MCF 10A (cell line): ENCODE measurements at regions of chr12 and their contacts with region 1.

Region 1: GRCh38 chr12:96194971-96195844 is 1.0 kb downstream of the ELK3 start:
- DNase-seq: peak; percentile 85
- H3K4me3 Mint-ChIP-seq: peak overlapping the region; percentile 95
- H3K27ac Mint-ChIP-seq: peak overlapping the region; percentile 75
- H3K4me1 Mint-ChIP-seq: peaks cover 13% of the 10 kb centered on the region
- H3K27me3 Mint-ChIP-seq: no peaks in the 10 kb centered on the region
- CTCF ChIP-seq: no peak

Region 2: DNA sequence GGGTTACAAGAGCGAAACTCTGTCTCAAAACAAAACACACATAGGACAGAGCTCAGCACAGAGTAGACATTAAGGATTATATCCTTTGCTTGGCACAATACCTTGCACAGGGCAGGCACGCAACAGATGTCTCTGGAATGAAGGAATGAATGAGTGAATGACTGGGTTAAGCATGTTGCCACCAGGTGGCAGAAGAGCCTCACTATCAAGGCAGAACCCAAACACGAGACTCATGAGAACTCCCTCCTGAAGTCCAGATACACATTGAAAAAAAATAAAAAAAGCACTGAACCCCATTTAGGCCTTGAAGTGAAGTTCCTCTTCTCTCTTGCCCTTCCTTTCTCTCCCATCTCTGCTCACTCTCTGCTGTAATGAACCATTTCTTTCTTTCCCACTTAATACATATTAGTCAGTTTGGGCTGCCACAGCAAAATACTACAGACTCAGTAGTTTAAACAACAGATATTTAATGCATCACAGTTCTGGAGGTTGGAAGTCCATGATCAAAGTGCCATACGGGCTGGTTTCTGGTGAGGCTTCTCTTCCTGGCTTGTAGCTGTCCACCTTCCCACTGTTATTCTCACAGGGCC is 133.2 kb before region 1 on chr12:
- CTCF ChIA-PET with region 1: interaction called, 3 read pairs
- POLR2A ChIA-PET with region 1: interaction called, 4 read pairs
- intact Hi-C with region 1: loop called (anchors 5 kb)
- DNase-seq: peak; percentile 87
- H3K4me3 Mint-ChIP-seq: no peak overlapping the region
- H3K27ac Mint-ChIP-seq: no peak overlapping the region
- H3K4me1 Mint-ChIP-seq: peaks cover 5% of the 10 kb centered on the region
- H3K27me3 Mint-ChIP-seq: no peaks in the 10 kb centered on the region
- CTCF ChIP-seq: peak; percentile 82

Region 3: GRCh38 chr12:96094201-96094600 is 101.0 kb before region 1 on chr12:
- CTCF ChIA-PET with region 1: interaction called, 4 read pairs
- POLR2A ChIA-PET with region 1: interaction called, 5 read pairs
- intact Hi-C with region 1: loop called (anchors 1 kb)
- DNase-seq: peak; percentile 92
- H3K4me3 Mint-ChIP-seq: peak overlapping the region; percentile 4
- H3K27ac Mint-ChIP-seq: peak overlapping the region; percentile 73
- H3K4me1 Mint-ChIP-seq: peaks cover 20% of the 10 kb centered on the region
- H3K27me3 Mint-ChIP-seq: no peaks in the 10 kb centered on the region
- CTCF ChIP-seq: no peak

Region 4: GRCh38 chr12:96132819-96133218 is 62.4 kb before region 1 on chr12:
- CTCF ChIA-PET with region 1: no interaction called
- POLR2A ChIA-PET with region 1: no interaction called
- intact Hi-C with region 1: no loop called
- DNase-seq: peak; percentile 42
- H3K4me3 Mint-ChIP-seq: no peak overlapping the region
- H3K27ac Mint-ChIP-seq: no peak overlapping the region
- H3K4me1 Mint-ChIP-seq: peaks cover 7% of the 10 kb centered on the region
- H3K27me3 Mint-ChIP-seq: peaks cover 16% of the 10 kb centered on the region
- CTCF ChIP-seq: no peak

Region 5: DNA sequence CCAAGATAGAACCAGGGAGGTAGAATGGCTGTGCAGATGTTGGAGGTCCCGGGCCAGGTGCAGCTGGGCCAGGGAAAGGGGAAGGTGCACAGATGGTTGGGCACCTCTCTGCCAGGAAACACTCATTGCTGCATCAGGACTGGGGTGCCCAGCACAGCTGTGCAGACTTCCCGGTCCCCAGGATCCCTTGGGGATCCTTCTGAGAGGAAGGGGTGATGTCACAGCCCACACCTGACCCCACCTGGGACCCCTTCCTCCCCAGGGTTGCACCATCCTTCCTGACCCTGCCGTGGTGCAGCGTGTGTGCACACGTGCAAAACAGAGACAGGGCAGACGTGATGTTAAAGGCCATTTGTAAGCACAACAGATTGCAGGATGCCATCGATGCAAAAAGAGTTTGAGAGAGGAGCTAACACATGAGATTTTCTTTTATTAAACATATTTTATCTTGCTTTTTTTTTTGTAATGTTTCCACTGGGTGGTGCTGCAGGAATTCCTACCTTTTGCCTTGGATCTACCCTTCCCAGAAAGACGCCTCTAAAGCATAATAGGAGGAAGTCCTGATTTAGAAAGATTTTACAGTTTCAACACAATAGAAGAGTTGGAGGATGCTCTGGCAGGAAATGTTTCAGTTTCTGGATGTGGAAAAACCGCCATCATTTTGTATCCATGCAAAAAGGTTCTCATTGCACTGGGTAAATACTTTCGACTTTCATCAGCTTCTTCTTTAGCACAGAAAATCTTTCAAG is 13.8 kb after region 1 on chr12:
- CTCF ChIA-PET with region 1: interaction called, 4 read pairs
- POLR2A ChIA-PET with region 1: interaction called, 187 read pairs
- intact Hi-C with region 1: no loop called
- DNase-seq: no peak
- H3K4me3 Mint-ChIP-seq: no peak overlapping the region
- H3K27ac Mint-ChIP-seq: peak overlapping the region; percentile 78
- H3K4me1 Mint-ChIP-seq: peaks cover 42% of the 10 kb centered on the region
- H3K27me3 Mint-ChIP-seq: no peaks in the 10 kb centered on the region
- CTCF ChIP-seq: peak; percentile 14